HepG2 (cell line): ENCODE measurements at regions of chr1 and their contacts with region 1.

Region 1: DNA sequence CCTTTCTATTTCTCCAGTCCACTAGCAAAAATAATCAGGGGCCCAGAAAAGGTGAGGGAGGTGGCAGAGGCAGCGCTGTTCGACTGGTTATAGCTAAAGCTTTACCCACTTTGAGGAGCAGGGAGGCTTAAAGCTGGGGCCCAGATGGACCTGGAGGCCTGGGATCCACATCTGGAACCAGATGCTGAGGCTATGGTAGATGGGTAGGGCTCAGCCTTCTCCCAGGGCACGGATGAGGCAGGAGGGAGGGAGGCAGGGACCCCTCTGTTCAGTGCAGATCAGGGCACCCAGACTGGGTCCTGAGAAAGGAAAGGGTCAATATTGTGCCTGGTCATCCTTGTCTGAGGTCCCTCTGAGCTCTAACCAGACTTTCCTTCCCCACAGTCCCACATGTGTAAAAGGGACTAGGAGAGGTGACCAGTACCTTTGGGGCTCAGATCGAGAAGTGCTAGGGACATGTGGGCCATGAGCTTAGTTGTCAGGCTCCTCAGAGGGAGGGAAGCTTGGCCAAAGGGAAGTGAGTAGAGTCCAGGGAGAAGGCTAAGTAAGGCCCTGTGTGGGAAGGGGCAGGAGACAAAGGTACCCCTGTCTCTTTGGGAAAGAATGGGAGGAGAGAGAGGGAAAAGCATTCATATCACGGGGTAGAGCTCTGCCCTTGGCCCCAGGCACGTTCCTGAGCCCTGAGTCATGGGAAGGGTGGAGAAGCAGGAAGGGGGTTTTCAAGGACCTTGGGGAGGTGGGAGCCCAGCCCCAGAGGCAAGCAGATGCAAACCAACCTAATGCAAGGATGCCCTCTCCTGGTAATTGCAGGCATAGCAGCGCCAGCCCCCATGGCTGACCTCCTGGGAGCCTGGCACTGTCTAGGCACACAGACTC is 15.4 kb downstream of the LMNA start:
- DNase-seq: peak; percentile 98
- ATAC-seq: peak; percentile 90
- H3K4me3 ChIP-seq: peak overlapping the region in 1 of 3 experiments; percentile 9; a peak in 1 of 6 replicates
- H3K27ac ChIP-seq: peak overlapping the region; percentile 93
- H3K4me1 ChIP-seq: peaks cover 59% of the 10 kb centered on the region
- H3K27me3 ChIP-seq: no peaks in the 10 kb centered on the region
- CTCF ChIP-seq: peak; percentile 99
- EP300 ChIP-seq: peak; percentile 81 to 90; a peak in 3 of 4 replicates
- POLR2A ChIP-seq: peak in 1 of 2 experiments; percentile 75; a peak in 2 of 4 replicates
- RAD21 ChIP-seq: peak; percentile 99

Region 2: GRCh38 chr1:155553349-155553748 is 576.6 kb before region 1 on chr1:
- CTCF ChIA-PET with region 1: no interaction called
- POLR2A ChIA-PET with region 1: no interaction called
- in situ Hi-C with region 1: no loop called
- intact Hi-C with region 1: no loop called
- DNase-seq: no peak
- ATAC-seq: no peak
- H3K4me3 ChIP-seq: no peak overlapping the region
- H3K27ac ChIP-seq: no peak overlapping the region
- H3K4me1 ChIP-seq: no peaks in the 10 kb centered on the region
- H3K27me3 ChIP-seq: no peaks in the 10 kb centered on the region
- CTCF ChIP-seq: no peak
- EP300 ChIP-seq: no peak
- POLR2A ChIP-seq: no peak
- RAD21 ChIP-seq: no peak

Region 3: DNA sequence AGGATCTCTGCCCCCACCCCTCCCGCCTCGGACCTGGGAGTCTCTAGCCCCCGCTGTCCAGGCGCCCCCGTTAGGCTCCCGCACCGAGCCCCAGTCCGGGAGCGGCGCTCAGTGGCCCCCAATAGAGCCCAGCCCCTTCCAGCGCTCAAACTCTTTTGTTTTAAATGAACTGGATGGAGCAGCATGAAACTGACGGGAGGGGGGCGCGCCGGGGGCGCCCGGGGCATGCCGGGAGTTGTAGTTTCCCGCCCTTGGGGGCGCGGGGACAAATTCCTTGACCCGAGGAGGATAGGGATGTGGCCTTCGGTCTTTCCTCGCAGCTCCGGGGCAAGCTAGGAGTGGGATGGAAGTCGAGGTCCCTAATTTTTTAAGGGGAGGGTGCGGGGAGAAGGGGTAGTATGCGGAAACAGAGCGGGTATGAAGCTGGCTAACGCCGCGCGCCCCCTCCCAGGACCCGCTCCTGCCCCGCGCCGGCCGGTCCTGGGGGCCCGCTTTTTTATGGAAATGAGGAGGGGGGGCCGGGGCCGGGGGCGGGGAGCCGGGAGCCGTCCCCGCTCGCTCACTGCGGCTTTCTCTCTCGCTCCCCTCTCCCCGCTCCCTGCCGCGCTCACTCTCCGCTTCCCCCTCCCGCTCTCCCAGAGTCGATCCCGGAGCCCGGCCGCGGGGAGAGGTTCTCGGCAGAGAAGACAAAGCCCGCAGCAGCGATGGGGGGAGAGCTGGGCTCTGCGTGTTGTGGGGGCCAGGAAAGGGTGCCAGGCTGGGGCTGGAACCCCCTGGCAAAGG is 47.4 kb before region 1 on chr1 and contains the start of gene MEX3A:
- CTCF ChIA-PET with region 1: interaction called, 3 read pairs
- POLR2A ChIA-PET with region 1: interaction called, 15 read pairs
- in situ Hi-C with region 1: no loop called
- intact Hi-C with region 1: no loop called
- DNase-seq: peak; percentile 75
- ATAC-seq: peak; percentile 77
- H3K4me3 ChIP-seq: peak within 1 kb of the TSS; percentile 88 to 94 (median 89)
- H3K27ac ChIP-seq: peak within 1 kb of the TSS; percentile 77
- H3K4me1 ChIP-seq: peaks cover 71% of the 10 kb centered on the region
- H3K27me3 ChIP-seq: no peaks in the 10 kb centered on the region; a peak in 1 of 5 replicates
- CTCF ChIP-seq: peak; percentile 10; the same call in 1 of the 2 replicates
- EP300 ChIP-seq: no peak
- POLR2A ChIP-seq: peak; percentile 21 to 45; a peak in 2 of 4 replicates
- RAD21 ChIP-seq: no peak
- total RNA-seq, gene MEX3A: 7.6 TPM in 2 replicates

Region 4: GRCh38 chr1:156090822-156091188 is 39.1 kb before region 1 on chr1:
- CTCF ChIA-PET with region 1: interaction called, 92 read pairs
- POLR2A ChIA-PET with region 1: interaction called, 113 read pairs
- in situ Hi-C with region 1: loop called (anchors 5 kb)
- intact Hi-C with region 1: loop called (anchors 1 kb)
- DNase-seq: peak; percentile 74
- ATAC-seq: peak; percentile 79
- H3K4me3 ChIP-seq: no peak overlapping the region
- H3K27ac ChIP-seq: no peak overlapping the region
- H3K4me1 ChIP-seq: peaks cover 47% of the 10 kb centered on the region
- H3K27me3 ChIP-seq: no peaks in the 10 kb centered on the region
- CTCF ChIP-seq: peak; percentile 92
- EP300 ChIP-seq: no peak
- POLR2A ChIP-seq: no peak
- RAD21 ChIP-seq: peak; percentile 93

Region 5: DNA sequence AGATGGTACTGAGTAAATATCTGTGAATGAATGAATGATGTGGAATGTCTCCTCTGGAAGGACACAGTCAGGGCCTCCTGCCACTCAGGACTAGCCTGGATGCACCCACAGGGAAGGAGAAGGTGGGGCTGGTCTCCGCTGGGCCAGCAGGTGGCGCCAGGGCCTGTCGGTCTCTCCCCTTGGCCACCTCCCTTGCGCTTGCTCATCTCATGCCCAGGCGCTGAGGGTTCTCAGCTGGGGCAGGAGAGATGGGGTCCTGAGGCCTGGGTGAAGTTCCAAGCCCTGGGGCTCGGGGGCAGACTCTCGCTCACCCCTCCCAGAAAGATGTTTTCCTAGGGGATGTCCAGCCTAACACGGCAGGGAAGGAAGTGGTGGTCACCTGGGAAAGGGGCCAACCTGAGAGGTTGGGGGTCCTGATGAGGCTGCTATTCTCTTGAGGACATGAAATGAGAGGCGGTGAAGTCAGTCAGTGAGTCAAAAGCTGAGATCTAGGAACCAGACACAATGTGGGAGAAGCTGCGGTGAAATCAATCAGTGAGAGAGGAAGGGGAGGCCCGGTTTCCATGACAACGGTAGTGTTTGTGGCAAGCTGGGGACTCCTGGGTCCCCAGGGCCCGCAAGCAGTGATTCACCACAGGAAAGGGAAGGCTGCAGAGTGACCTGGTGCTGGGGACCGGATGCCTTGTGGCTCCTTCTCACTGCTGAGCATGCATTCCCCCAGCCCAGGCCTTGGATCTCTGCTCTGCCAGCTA is 33.1 kb before region 1 on chr1:
- CTCF ChIA-PET with region 1: interaction called, 92 read pairs
- POLR2A ChIA-PET with region 1: interaction called, 113 read pairs
- in situ Hi-C with region 1: loop called (anchors 5 kb)
- intact Hi-C with region 1: loop called (anchors 1 kb)
- DNase-seq: peak; percentile 65
- ATAC-seq: peak; percentile 97
- H3K4me3 ChIP-seq: no peak overlapping the region
- H3K27ac ChIP-seq: no peak overlapping the region
- H3K4me1 ChIP-seq: peaks cover 69% of the 10 kb centered on the region
- H3K27me3 ChIP-seq: no peaks in the 10 kb centered on the region
- CTCF ChIP-seq: peak; percentile 99
- EP300 ChIP-seq: 0 out of 4 replicates have a peak, but pooled peaks of 1 of the 2 experiments have one; percentile 44
- POLR2A ChIP-seq: no peak
- RAD21 ChIP-seq: peak; percentile 98

Region 6: DNA sequence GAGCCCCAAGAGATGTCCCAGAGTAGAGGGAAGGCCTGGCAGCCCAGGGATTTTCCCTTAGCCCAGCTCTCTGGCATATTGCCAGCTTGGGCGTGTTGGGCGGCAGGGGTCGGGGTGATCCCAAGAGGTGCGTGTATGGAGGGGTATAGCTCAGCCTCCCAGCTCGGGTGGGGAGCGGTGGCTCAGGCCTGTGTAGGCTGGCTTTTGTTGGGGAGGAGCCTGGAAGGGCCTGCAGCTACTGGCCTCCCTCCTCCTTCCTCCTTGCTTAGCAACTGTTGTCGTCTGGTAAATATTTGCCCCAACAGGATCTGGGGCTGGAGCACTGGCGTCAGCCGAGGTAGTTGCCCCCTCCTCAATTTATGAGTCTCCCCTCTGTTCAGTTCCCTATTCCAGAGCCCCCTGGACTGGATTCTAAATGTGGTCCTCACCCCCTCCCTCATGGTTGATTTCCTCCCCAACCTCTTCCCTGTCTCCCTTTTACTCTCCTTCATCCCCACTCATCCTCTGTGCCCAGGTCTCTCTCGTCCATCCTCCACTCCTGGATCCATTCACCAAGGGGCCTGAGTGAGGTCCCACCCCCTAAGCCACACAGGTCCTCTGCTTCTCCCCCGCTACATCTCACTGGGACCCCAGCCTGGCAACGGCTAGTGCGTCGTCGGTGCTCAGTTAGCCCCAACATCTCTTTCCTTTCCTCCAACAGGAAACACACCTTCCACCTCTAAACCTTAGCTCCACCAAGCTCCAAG is 25.7 kb before region 1 on chr1:
- CTCF ChIA-PET with region 1: interaction called, 3 read pairs
- POLR2A ChIA-PET with region 1: interaction called, 113 read pairs
- in situ Hi-C with region 1: loop called (anchors 5 kb)
- intact Hi-C with region 1: no loop called
- DNase-seq: peak; percentile 50
- ATAC-seq: peak; percentile 49
- H3K4me3 ChIP-seq: peak overlapping the region in 1 of 3 experiments; percentile 74; a peak in 2 of 6 replicates
- H3K27ac ChIP-seq: peak overlapping the region; percentile 69
- H3K4me1 ChIP-seq: peaks cover 95% of the 10 kb centered on the region
- H3K27me3 ChIP-seq: 0 out of 5 replicates have a peak, but pooled peaks cover 0 to 8% of the 10 kb centered on the region in 2 experiments
- CTCF ChIP-seq: no peak
- EP300 ChIP-seq: no peak
- POLR2A ChIP-seq: no peak
- RAD21 ChIP-seq: no peak

Region 7: GRCh38 chr1:156114101-156114916 is 15.6 kb before region 1 on chr1 and contains the start of gene LMNA:
- CTCF ChIA-PET with region 1: interaction called, 3 read pairs
- POLR2A ChIA-PET with region 1: interaction called, 108 read pairs
- in situ Hi-C with region 1: no loop called
- intact Hi-C with region 1: loop called (anchors 2 kb)
- DNase-seq: peak; percentile 75
- ATAC-seq: peak; percentile 81
- H3K4me3 ChIP-seq: peak within 1 kb of the TSS; percentile 78 to 92 (median 83)
- H3K27ac ChIP-seq: peak within 1 kb of the TSS; percentile 81
- H3K4me1 ChIP-seq: peaks cover 68% of the 10 kb centered on the region
- H3K27me3 ChIP-seq: no peaks in the 10 kb centered on the region; a peak in 1 of 5 replicates
- CTCF ChIP-seq: 0 out of 2 replicates have a peak, but pooled peaks have one; percentile 17
- EP300 ChIP-seq: no peak
- POLR2A ChIP-seq: peak in 1 of 2 experiments; percentile 90; a peak in 2 of 4 replicates
- RAD21 ChIP-seq: no peak
- total RNA-seq, gene LMNA: 190 and 225 TPM in 2 replicates